ENCODE measurements at regions of chr22 and their contacts with region 1.

Region 1: DNA sequence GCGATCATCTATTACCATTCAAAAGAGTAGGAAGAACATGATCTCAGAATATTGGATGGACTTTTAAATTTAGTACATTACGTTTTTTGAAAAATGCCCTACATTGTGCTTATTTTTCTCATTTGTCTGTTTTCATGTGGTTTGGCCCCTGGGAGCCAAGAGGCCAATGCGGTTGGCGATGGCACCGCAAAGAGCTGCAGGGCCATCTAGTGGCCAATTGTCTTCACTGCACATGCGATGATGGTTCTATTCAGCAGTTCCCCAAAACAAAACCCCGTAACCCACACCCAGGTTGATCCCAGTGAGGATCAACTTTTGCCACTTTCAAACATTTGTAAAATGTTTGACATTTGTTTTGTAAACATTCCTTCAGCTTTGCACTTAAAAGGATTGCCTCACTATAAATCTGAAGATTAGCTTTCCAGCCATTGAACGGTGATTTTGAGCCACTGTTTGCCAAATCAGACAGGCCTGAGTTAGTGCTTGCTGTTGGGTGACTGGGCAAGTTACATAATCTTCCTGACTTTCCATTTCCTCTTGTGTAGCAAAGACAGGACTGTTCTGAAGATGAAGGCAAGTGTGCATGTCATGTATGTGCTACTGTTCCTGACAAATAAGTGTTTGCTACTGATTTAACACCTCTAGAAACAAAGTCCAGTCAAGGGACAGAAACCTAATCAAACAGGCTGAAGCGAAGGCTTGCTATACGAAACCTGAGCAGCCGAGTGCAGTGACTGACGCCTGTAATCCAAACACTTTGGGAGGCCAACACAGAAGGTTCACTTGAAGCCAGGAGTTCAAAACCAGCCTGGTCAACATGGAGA is 29.2 kb upstream of the XBP1 start:
- DNase-seq: peak; percentile 83
- CTCF ChIP-seq: peak; percentile 93

Region 2: GRCh38 chr22:28600546-28601143 is 228.9 kb before region 1 on chr22:
- CTCF ChIA-PET with region 1: interaction called, 79 read pairs
- POLR2A ChIA-PET with region 1: no interaction called
- DNase-seq: peak; percentile 37
- CTCF ChIP-seq: peak; percentile 45

Region 3: DNA sequence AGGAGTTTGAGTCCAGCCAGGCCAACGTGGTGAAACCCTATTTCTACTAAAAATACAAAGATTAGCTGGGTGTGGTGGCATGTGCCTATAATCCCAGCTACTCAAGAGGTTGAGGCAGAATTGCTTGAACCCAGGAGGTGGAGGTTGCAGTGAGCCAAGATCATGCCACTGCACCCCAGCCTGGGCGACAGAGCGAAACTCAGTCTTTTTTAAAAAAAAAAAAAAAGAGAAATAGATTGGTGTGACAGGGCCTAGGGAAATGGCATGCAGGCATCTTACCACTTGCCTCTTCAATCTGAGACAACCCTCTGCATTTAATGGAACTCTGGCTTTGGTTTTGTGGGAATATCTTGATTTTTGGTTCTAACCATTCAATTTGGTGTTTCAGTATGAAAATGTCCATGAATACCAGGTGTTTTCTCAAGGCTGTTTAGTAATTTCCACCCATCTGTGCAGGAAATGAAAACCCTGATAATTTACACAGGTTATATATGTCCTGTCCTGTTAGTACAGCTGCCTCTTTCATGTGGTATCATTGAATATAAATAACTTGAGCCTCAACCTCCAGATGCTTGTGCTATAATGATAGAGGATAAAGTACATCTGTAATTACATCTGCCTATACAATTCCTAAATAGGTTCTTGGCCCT is 37.6 kb before region 1 on chr22:
- CTCF ChIA-PET with region 1: interaction called, 33 read pairs
- POLR2A ChIA-PET with region 1: no interaction called
- DNase-seq: peak; percentile 57
- CTCF ChIP-seq: no peak

Region 4: GRCh38 chr22:28810821-28811491 is 18.6 kb before region 1 on chr22:
- CTCF ChIA-PET with region 1: interaction called, 15 read pairs
- POLR2A ChIA-PET with region 1: no interaction called
- DNase-seq: no peak
- CTCF ChIP-seq: no peak

Region 5: GRCh38 chr22:29040385-29041275 is 211.1 kb after region 1 on chr22:
- CTCF ChIA-PET with region 1: interaction called, 11 read pairs
- POLR2A ChIA-PET with region 1: interaction called, 3 read pairs
- DNase-seq: peak; percentile 66
- CTCF ChIP-seq: peak; percentile 79

Region 6: DNA sequence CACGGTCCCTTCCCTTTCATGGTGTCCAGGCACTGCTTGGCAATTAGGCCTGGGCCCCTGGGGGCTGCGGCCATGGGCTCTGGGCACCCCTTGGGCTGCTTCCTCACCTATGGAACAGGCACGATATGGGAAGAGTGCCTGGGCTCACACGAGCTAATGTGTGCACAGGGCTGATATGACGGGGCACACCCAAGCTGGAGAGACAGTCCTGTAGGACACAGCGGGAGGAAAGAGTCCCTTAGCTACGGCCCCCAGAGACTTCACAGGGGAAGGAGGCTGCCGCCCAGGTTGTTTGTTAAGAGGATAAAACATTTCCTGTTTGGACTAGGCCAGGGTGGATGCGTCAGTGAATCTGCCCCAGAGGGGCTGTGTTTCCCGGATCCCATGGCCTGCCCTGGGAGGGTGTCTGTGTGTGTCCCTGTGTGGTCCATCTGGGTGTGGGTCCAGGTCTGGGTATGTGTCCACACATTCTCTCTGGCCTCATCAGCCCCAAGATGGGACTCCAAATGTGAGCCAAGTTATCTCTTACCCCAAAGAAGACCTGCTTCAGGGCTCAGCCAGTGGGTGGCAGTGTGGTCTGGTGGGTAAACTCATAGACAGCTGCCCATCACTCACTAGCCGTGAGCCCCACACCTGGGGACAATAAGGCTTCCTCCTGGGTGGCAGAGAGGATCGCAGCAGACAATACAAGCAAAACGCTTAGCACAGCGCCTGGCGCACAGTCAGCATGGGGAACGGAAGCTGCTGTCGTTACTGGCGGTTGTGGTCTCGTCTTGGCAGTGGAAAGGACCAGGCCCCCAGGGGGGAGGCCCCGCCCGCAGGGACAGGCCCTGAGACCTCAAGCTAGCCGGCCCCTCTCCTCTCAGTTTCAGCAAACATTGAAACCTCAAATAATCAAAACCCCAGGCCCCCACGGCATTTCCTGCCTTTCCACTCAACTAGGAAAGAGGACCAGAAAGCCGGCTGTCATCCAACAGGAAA is 372.9 kb after region 1 on chr22:
- CTCF ChIA-PET with region 1: no interaction called
- POLR2A ChIA-PET with region 1: no interaction called
- DNase-seq: peak; percentile 91
- CTCF ChIP-seq: peak; percentile 49

Measured in GM10248 (cell line).